ENCODE measurements at regions of chr11 and their contacts with region 1.

Region 1: DNA sequence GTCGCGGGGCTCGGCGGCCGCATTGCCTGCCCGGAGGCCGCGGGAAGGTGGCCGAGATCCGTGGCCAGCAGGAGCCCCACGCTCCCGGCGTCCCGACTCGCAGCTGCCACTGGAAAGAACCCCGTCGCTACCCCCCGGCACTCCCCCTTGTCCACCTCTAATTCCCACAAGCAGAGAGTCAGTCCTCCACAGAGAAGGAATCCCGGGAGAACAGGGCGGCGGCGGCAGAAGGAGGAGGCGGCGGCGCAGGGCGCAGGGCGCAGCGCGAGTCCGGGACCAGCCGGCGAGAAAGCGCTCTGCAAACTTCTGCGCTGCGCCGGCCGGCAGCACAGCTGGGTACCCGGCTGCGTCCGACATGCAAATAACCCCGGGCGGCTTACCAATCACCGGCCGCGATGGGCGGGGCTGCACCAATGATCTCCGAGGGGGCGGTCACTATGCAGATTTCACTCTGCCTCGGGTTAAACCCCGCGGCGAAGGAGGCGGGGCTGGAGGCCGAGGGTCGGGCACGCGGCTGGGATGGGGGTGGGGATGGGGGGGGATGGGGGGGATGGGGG is at the start of gene ABTB2:
- DNase-seq: peak; percentile 93 to 99
- H3K4me3 ChIP-seq: peak within 1 kb of the TSS; percentile 92
- H3K27ac ChIP-seq: peak within 1 kb of the TSS; percentile 67
- H3K4me1 ChIP-seq: peaks cover 41% of the 10 kb centered on the region
- H3K27me3 ChIP-seq: no peaks in the 10 kb centered on the region
- CTCF ChIP-seq: no peak
- total RNA-seq, gene ABTB2: 12.7 and 12.9 TPM in 2 replicates

Region 2: GRCh38 chr11:33987975-33988580 is 369.7 kb before region 1 on chr11:
- CTCF ChIA-PET with region 1: no interaction called
- POLR2A ChIA-PET with region 1: no interaction called
- intact Hi-C with region 1: loop called (anchors 2 kb)
- DNase-seq: peak; percentile 67 to 76
- H3K4me3 ChIP-seq: no peak overlapping the region
- H3K27ac ChIP-seq: no peak overlapping the region
- H3K4me1 ChIP-seq: no peaks in the 10 kb centered on the region
- H3K27me3 ChIP-seq: no peaks in the 10 kb centered on the region
- CTCF ChIP-seq: peak; percentile 96

Region 3: DNA sequence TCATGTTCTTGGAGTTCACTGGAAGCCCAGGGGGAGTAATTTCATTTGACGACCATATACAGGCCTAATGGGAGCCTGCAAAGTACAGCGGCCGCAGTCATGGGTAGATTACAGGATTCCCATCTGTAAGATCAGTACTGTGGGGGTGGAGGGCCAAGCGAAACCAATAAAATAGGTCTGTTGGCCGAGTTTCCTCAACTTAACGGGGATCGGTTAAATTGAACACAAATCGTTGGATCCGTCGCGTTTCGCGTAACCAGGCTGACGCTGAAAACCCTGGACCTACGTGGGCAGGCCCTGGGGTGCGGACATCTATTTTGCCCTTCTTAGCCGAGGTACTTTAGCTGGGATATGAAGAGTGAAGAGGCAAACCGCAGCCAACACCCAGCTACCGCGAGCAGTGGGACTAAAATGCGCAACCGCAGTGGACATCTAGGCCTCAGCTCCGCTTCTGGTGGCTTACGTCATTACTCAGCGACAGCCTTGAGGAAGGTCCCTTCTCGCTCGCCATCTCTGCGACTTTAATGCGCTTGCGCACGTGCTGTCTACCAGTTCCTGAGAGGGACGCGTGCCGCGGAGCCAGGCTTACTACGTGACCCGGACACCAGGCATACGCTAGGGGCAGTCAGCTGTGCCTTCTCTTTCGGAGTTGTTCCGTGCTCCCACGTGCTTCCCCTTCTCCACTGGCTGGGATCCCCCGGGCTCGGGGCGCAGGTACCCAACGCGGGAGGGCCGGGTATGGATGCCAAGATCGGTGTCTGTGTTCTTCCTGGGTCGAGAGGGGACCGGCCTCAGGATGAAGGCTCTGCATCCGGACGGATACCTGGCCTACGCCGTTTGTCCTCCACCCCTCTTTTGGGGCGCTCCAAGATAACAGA is 252.5 kb before region 1 on chr11 and contains the start of gene NAT10:
- CTCF ChIA-PET with region 1: no interaction called
- POLR2A ChIA-PET with region 1: no interaction called
- intact Hi-C with region 1: loop called (anchors 2 kb)
- DNase-seq: peak; percentile 97
- H3K4me3 ChIP-seq: peak within 1 kb of the TSS; percentile 88
- H3K27ac ChIP-seq: peak within 1 kb of the TSS; percentile 90
- H3K4me1 ChIP-seq: peaks cover 20% of the 10 kb centered on the region
- H3K27me3 ChIP-seq: no peaks in the 10 kb centered on the region
- CTCF ChIP-seq: no peak
- total RNA-seq, gene NAT10: 53.2 and 62.3 TPM in 2 replicates

Region 4: DNA sequence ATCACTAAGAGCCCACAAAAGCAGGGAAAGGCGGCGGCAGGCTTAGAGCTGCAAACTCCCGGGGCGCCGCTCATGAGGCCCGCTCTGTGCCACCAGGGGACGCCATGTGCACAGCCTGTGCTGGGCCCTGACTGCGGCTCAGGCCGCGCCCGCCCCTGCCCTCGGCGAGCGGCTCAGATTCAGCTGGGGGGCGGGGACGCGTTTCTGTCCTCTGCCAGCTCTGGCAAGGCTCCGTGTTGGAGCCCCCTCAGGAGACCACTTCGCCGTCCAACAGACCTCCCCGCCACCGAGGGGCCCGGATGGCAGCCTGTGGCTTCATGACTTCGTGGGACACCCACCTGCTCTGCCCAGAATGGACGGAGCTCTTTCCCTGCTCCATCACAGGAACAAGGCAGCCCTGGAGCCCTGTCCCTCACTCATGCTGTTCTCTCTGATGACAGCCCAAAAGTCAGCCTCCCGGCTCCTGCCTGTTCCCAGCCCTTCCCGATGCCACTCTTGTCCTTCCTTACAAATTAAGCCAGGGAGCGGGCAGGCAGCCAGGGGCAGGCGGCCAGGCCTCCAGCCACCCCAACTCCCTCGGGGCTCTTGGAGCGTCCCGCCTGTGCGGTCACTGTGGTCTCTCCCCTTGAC is 183.3 kb before region 1 on chr11:
- CTCF ChIA-PET with region 1: interaction called, 24 read pairs
- POLR2A ChIA-PET with region 1: no interaction called
- intact Hi-C with region 1: loop called (anchors 1 kb)
- DNase-seq: peak; percentile 53 to 85
- H3K4me3 ChIP-seq: peak overlapping the region; percentile 40; the same call in 1 of the 2 replicates
- H3K27ac ChIP-seq: no peak overlapping the region
- H3K4me1 ChIP-seq: peaks cover 8% of the 10 kb centered on the region
- H3K27me3 ChIP-seq: no peaks in the 10 kb centered on the region
- CTCF ChIP-seq: peak; percentile 92

Region 5: DNA sequence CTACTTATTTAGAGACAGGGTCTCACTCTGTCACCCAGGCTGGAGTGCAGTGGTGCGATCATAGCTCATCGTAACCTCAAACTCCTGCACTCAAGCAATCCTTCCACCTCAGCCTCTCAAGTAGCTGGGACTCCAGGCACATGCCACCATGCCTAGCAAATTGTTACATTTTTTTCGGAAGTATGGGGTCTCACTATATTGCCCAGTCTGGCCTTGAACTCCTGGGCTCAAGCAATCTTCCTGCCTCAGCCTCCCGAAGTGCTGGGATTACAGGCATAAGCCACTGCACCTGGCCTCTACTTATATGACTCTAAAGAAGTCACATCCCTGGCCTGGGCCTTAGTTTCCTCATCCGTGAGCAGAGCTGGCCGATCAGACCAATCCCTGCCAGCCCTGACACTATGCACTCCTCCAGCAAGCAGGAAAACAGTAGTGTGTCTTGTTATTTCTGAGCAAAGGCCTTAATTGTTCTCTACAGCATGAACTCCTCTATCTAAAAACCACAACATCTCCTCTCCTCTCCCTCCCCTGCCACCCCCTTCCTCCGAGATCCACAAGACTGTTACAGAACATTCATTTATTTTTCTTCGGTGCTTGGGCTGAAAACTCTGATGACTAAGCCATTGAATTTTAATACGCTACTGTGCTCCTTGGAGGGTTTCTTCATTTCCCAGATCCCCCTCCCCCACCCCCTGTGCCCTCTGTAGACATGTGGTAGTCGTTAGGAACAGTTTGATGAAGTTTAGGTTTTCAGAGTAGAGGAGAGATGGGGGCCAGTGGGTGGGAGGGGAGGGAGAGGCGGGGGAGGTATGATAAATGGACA is 91.5 kb before region 1 on chr11:
- CTCF ChIA-PET with region 1: interaction called, 6 read pairs
- POLR2A ChIA-PET with region 1: interaction called, 4 read pairs
- intact Hi-C with region 1: loop called (anchors 1 kb)
- DNase-seq: peak; percentile 35 to 64
- H3K4me3 ChIP-seq: no peak overlapping the region
- H3K27ac ChIP-seq: peak overlapping the region; percentile 48
- H3K4me1 ChIP-seq: peaks cover 70% of the 10 kb centered on the region
- H3K27me3 ChIP-seq: no peaks in the 10 kb centered on the region
- CTCF ChIP-seq: no peak

Region 6: GRCh38 chr11:34344768-34345539 is 12.8 kb before region 1 on chr11:
- CTCF ChIA-PET with region 1: interaction called, 4 read pairs
- POLR2A ChIA-PET with region 1: interaction called, 21 read pairs
- intact Hi-C with region 1: no loop called
- DNase-seq: peak; percentile 90 to 99
- H3K4me3 ChIP-seq: peak overlapping the region; percentile 40; the same call in 1 of the 2 replicates
- H3K27ac ChIP-seq: peak overlapping the region; percentile 91
- H3K4me1 ChIP-seq: peaks cover 99% of the 10 kb centered on the region
- H3K27me3 ChIP-seq: no peaks in the 10 kb centered on the region
- CTCF ChIP-seq: no peak

Region 7: DNA sequence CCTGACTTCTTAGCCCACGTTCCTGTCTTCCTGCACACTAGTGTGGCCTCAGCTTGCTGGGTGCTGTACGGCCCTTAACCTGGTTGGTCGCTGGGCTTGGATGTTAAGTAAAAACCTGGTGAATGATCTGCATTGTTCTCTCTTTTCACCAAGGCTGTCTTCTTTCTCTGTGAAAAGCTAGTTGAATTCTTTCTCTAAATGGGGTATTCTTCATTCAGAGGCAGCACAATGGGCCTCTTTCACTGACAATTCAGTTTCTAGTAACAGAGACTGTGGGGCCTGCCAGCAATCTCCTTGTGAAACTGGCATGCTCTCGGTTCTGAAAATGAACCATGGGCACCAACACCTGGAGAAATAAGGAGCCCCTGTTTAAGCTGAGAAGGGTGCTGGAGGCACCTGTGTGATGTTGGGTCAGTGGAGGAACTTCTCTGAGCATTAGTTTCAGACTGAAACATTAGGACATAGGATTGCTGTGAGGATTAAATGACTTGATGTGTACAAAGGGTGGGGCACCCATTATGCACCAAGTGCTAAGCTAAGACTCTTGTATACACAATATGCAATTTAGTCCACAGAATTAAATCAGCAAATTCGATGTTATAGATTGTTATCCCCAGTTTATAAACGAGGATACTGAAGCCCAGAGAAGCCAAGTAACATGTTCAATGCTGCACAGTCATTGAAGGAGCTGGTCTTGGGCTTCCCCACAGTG is 188.9 kb after region 1 on chr11:
- CTCF ChIA-PET with region 1: interaction called, 11 read pairs
- POLR2A ChIA-PET with region 1: no interaction called
- intact Hi-C with region 1: no loop called
- DNase-seq: no peak
- H3K4me3 ChIP-seq: no peak overlapping the region
- H3K27ac ChIP-seq: no peak overlapping the region
- H3K4me1 ChIP-seq: peaks cover 8% of the 10 kb centered on the region
- H3K27me3 ChIP-seq: no peaks in the 10 kb centered on the region
- CTCF ChIP-seq: no peak

Region 8: DNA sequence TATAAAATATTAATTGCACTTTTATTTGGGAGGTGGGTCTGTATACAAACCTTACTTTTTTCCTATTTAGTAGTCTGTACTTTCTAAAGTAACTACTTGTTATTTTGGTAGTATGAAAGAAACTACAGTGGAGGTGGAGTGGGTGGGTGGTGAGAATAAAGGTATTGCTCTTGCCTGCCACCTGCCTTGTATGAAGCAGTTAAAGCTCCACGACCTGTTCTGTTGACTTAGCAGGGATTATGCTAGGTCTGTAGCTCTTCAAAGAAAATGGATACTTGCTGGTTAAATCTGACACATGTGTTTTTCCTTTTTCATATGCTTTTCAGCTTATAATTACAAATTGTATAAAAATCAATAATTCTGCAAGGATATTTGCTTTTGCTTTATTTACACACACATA is 375.1 kb after region 1 on chr11:
- CTCF ChIA-PET with region 1: no interaction called
- POLR2A ChIA-PET with region 1: no interaction called
- intact Hi-C with region 1: no loop called
- DNase-seq: no peak
- H3K4me3 ChIP-seq: no peak overlapping the region
- H3K27ac ChIP-seq: no peak overlapping the region
- H3K4me1 ChIP-seq: 0 out of 2 replicates have a peak, but pooled peaks cover 4% of the 10 kb centered on the region
- H3K27me3 ChIP-seq: no peaks in the 10 kb centered on the region
- CTCF ChIP-seq: no peak